Astrocyte of the cerebellum (primary cell): ENCODE measurements at regions of chr2 and their contacts with region 1.

Region 1: DNA sequence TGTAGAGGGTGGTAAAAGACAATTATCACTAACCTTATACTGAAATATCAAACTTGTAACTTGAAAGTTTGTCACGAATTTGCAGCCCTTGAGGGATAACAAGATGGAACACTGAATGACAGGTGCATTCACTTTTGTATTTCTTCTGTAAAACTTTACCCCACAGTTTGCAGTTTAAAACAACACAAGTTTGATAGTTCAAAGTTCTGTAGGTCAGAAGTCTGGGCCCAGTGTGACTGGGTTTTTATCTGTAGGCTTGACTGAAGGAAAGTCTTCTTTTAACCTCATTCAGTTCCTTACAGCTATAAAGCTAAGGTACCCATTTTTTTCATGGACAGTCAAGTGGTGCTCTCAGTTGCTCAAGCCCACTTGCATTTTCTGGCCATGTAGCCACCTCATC is 257.1 kb upstream of the NRXN1 start:
- DNase-seq: no peak
- H3K4me3 ChIP-seq: no peak overlapping the region
- CTCF ChIP-seq: no peak

Region 2: DNA sequence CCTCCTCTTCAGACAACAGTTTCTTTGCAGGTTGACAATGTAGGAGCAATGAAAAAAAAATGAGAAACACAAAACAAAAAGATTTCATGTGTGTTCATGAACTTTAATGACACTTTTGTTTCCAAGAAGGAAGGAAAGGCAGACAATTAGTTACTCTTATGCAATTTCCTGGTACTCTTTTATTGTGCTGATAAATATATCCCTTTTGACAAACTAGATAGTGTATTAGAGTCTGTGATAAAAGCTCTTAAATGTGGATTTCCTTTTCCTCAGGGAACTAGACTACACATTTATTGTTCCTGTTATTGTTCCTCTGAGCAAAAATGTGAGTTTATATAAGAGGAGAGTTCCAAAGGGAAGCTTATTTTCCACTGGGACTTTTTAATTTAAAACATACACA is 68.4 kb before region 1 on chr2:
- in situ Hi-C with region 1: loop called (anchors 5 kb)
- DNase-seq: no peak
- H3K4me3 ChIP-seq: no peak overlapping the region
- CTCF ChIP-seq: no peak